ENCODE measurements at regions of chr2 and their contacts with region 1.

Region 1: DNA sequence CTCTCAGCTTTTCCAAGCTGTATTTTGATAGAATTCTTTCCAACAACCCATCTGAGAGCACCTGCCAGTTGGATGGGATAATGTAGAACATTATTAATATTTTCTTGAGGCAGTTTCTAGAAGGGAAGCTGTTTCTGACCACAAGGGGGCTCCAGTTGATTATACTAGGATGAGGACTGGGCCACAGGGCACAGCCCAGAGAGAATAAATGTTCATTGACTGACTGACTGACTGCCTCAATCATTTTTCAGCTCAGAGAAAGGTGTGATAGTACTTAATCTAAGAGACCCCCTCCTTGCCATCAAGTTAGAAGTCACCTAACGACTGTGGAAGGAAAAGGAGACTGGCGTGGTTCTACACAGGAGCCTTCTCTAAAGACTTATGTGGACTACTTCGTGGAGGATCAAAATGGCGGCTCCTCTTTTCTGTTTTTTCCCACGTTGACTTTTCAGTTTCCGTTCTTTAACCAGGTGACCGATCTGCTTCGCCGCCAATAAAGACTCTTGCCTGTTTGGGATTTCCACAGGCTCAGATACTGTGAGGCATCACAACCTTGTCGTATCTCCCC is 31.9 kb upstream of the CREG2 start:
- DNase-seq: peak; percentile 74
- ATAC-seq: peak; percentile 89
- H3K4me3 ChIP-seq: no peak overlapping the region
- H3K27ac ChIP-seq: no peak overlapping the region
- H3K4me1 ChIP-seq: no peaks in the 10 kb centered on the region
- H3K27me3 ChIP-seq: no peaks in the 10 kb centered on the region
- CTCF ChIP-seq: peak; percentile 92
- POLR2A ChIP-seq: no peak
- RAD21 ChIP-seq: peak; percentile 93

Region 2: DNA sequence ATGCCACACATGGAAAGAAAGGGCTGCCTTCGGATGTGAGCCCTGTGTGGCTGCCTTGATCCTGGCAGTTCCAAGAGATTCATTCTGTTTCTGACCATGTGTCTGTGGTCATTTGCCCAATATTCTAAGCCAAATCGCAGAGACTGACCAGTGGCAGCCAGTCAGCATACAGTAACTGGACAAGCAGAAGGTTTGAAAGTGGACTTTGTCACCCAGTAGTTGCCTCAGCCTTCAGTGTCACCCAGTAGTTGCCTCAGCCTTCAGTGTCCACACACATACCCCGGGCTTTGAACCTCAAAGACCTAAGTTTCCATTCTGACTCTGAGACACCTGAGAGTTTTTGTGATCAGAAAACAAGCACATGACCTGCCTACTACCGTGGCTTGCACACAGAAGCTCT is 50.7 kb after region 1 on chr2:
- CTCF ChIA-PET with region 1: no interaction called
- POLR2A ChIA-PET with region 1: no interaction called
- dilution Hi-C with region 1: no loop called
- in situ Hi-C with region 1: no loop called
- intact Hi-C with region 1: no loop called
- DNase-seq: no peak
- ATAC-seq: no peak
- H3K4me3 ChIP-seq: no peak overlapping the region
- H3K27ac ChIP-seq: no peak overlapping the region
- H3K4me1 ChIP-seq: peaks cover 16% of the 10 kb centered on the region
- H3K27me3 ChIP-seq: no peaks in the 10 kb centered on the region
- CTCF ChIP-seq: no peak
- POLR2A ChIP-seq: no peak
- RAD21 ChIP-seq: no peak

Region 3: GRCh38 chr2:101751875-101752619 is 332.9 kb after region 1 on chr2:
- CTCF ChIA-PET with region 1: no interaction called
- POLR2A ChIA-PET with region 1: no interaction called
- dilution Hi-C with region 1: no loop called
- in situ Hi-C with region 1: no loop called
- intact Hi-C with region 1: loop called (anchors 5 kb)
- DNase-seq: no peak
- ATAC-seq: no peak
- H3K4me3 ChIP-seq: no peak overlapping the region
- H3K27ac ChIP-seq: no peak overlapping the region
- H3K4me1 ChIP-seq: peaks cover 30% of the 10 kb centered on the region
- H3K27me3 ChIP-seq: no peaks in the 10 kb centered on the region
- CTCF ChIP-seq: no peak
- POLR2A ChIP-seq: no peak
- RAD21 ChIP-seq: no peak

Region 4: GRCh38 chr2:101844055-101844635 is 425.0 kb after region 1 on chr2:
- CTCF ChIA-PET with region 1: no interaction called
- POLR2A ChIA-PET with region 1: no interaction called
- dilution Hi-C with region 1: no loop called
- in situ Hi-C with region 1: loop called (anchors 10 kb)
- intact Hi-C with region 1: no loop called
- DNase-seq: peak; percentile 75
- ATAC-seq: peak; percentile 76
- H3K4me3 ChIP-seq: no peak overlapping the region
- H3K27ac ChIP-seq: no peak overlapping the region
- H3K4me1 ChIP-seq: peaks cover 18% of the 10 kb centered on the region
- H3K27me3 ChIP-seq: no peaks in the 10 kb centered on the region
- CTCF ChIP-seq: no peak
- POLR2A ChIP-seq: no peak
- RAD21 ChIP-seq: no peak

Region 5: GRCh38 chr2:101873543-101873942 is 454.4 kb after region 1 on chr2:
- CTCF ChIA-PET with region 1: no interaction called
- POLR2A ChIA-PET with region 1: no interaction called
- dilution Hi-C with region 1: no loop called
- in situ Hi-C with region 1: no loop called
- intact Hi-C with region 1: loop called (anchors 2 kb)
- DNase-seq: no peak
- ATAC-seq: peak; percentile 27; the same call in 1 of the 2 replicates
- H3K4me3 ChIP-seq: no peak overlapping the region
- H3K27ac ChIP-seq: no peak overlapping the region
- H3K4me1 ChIP-seq: no peaks in the 10 kb centered on the region
- H3K27me3 ChIP-seq: no peaks in the 10 kb centered on the region
- CTCF ChIP-seq: peak; percentile 34
- POLR2A ChIP-seq: no peak
- RAD21 ChIP-seq: peak; percentile 25; the same call in 1 of the 2 replicates

Measured in IMR-90 (cell line).